Ascending aorta (tissue), 2 donors: ENCODE measurements at regions of chr15 and their contacts with region 1.

Region 1: GRCh38 chr15:56918046-56918938 is at the start of gene TCF12:
- DNase-seq: peak; percentile 68 to 96
- H3K4me3 ChIP-seq: peak within 1 kb of the TSS; percentile 87 to 97
- H3K27ac ChIP-seq: peak within 1 kb of the TSS; percentile 97 to 98
- H3K4me1 ChIP-seq: peaks cover 0 to 31% of the 10 kb centered on the region in 2 donors
- H3K27me3 ChIP-seq: no peaks in the 10 kb centered on the region
- CTCF ChIP-seq: peak; percentile 27 to 50 (median 29)
- total RNA-seq, gene TCF12: 144 TPM

Region 2: DNA sequence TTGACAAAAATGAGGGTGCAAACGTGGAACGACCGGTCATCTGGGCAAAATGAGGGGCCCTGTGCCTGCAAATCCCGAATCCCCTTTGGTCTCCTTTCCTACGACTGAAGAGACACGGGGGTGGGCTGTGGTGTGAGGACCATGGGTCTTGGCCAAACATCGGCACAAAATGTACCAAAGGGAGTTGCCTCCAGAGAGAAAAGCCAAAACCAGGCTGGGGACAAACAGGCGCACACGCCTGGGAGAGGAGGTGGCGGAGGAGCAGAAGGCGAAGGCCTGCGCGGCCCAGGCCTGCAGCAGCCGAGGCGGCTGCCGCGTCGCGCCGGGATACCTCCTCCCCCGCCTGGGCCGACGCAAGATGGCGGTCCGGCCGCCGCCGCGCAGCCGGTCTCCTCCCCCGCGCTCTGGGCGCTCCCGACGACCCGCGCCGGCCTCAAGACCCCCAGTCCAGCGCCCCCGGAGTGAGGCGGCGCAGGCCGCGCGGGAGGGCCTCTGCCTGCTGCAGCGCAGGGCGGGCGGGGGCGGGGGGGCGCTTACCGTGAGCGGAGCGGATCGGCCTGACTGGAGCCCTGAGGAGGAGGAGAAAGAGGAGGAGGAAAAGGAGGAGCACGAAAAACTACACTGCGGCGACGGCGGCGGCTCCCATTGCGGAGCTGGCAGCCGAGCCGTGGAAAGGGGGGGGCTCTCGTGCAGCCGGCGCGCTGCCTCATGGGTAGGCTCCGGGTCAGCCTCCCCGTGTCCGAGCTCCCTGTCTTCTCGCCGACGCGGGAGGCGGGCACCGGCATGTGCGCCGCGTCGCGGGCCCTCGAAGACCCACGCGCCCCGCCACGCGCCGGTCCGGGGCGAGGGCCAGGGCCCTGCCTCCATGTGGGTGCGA is 185.1 kb before region 1 on chr15 and contains the start of gene ZNF280D:
- intact Hi-C with region 1: loop called (anchors 1 kb)
- DNase-seq: peak; percentile 25 to 93
- H3K4me3 ChIP-seq: peak within 1 kb of the TSS; percentile 78 to 94
- H3K27ac ChIP-seq: peak within 1 kb of the TSS; percentile 95 to 96
- H3K4me1 ChIP-seq: peaks cover 7 to 31% of the 10 kb centered on the region in 2 donors
- H3K27me3 ChIP-seq: no peaks in the 10 kb centered on the region
- CTCF ChIP-seq: no peak
- total RNA-seq, gene ZNF280D: 20.5 TPM

Region 3: GRCh38 chr15:56832125-56832524 is 86.2 kb before region 1 on chr15:
- intact Hi-C with region 1: loop called (anchors 5 kb)
- DNase-seq: peak; percentile 29 to 79
- H3K4me3 ChIP-seq: peak overlapping the region in 1 of 2 donors; percentile 1
- H3K27ac ChIP-seq: peak overlapping the region; percentile 31 to 32
- H3K4me1 ChIP-seq: peaks cover 3 to 9% of the 10 kb centered on the region in 2 donors
- H3K27me3 ChIP-seq: no peaks in the 10 kb centered on the region
- CTCF ChIP-seq: no peak

Region 4: DNA sequence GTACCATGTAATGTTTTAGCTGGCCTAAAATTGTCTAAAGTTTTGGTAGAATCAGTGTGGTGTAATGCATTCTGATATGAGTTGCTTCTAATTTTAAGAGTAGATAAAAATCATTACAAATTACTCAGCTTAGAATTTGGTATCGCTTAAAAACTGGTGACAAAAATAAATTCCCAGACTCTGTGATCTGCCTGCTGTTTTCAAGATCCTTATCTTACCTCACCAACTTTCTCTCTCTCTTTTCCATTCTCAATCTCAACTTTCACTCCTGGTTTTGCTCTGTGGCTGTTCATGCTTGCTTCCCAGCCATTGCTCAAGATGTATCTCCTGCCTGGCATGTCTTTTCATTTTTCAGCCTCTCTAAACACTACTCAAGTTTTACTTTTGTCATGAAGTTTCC is 45.9 kb after region 1 on chr15:
- intact Hi-C with region 1: no loop called
- DNase-seq: no peak
- H3K4me3 ChIP-seq: no peak overlapping the region
- H3K27ac ChIP-seq: peak overlapping the region; percentile 12 to 24
- H3K4me1 ChIP-seq: peaks cover 0 to 21% of the 10 kb centered on the region in 2 donors
- H3K27me3 ChIP-seq: no peaks in the 10 kb centered on the region
- CTCF ChIP-seq: no peak

Region 5: GRCh38 chr15:57146506-57147201 is 228.4 kb after region 1 on chr15:
- intact Hi-C with region 1: loop called (anchors 5 kb)
- DNase-seq: no peak
- H3K4me3 ChIP-seq: peak overlapping the region; percentile 18 to 36
- H3K27ac ChIP-seq: peak overlapping the region; percentile 12 to 28
- H3K4me1 ChIP-seq: peaks cover 7 to 28% of the 10 kb centered on the region in 2 donors
- H3K27me3 ChIP-seq: no peaks in the 10 kb centered on the region
- CTCF ChIP-seq: peak; percentile 51 to 69 (median 57)

Region 6: GRCh38 chr15:57692709-57693108 is 774.4 kb after region 1 on chr15:
- intact Hi-C with region 1: loop called (anchors 10 kb)
- DNase-seq: no peak
- H3K4me3 ChIP-seq: no peak overlapping the region
- H3K27ac ChIP-seq: peak overlapping the region; percentile 77 to 85
- H3K4me1 ChIP-seq: peaks cover 8 to 41% of the 10 kb centered on the region in 2 donors
- H3K27me3 ChIP-seq: no peaks in the 10 kb centered on the region
- CTCF ChIP-seq: no peak